ENCODE measurements at regions of chr10 and their contacts with region 1.

Region 1: DNA sequence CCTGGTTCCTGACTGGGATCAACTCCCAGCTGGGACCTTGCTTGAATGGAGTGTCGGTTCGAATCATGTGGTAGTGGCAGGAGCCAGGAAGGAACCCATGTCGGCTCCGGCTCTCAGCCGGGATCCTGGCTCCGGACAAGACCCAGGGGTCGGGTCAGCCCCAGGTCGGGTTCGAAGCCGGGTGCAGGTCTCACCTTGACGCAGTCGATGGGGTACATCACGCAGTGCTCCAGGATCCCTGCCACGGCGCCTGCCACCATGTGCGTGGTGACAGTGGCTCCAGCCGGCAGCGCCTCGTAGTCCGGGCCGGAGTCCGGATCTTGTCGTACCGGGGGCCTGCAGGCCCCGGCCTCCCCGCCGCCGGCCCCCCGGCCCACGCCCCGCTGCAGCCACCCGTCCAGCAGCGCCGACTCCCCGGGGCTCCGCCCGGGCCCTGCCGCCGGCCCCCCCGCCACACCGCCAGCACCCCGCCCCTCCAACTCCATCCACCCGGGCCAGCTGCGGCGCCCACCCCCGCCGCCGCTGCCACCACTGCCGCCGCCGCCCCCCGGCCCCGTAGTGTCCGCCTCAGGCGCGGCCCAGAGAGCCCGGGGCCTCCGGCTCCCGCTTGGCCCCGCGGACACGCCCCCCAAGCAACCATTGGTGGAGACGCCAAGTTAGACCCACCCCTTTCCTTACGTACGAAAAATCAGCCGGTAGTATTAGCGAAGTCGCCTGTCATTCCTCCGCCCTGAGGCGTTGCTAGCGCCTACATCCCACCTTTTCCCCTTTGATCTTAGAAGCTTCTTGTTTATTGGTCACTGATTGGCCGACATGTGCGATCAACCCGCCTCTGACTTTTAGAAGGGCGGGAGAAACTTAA is at the start of gene SLC25A28:
- DNase-seq: peak; percentile 35 to 100 (median 98)
- H3K4me3 ChIP-seq: peak within 1 kb of the TSS; percentile 80 to 92 (median 90)
- H3K27ac ChIP-seq: peak within 1 kb of the TSS; percentile 98
- H3K4me1 ChIP-seq: peaks cover 2 to 29% (median 24%) of the 10 kb centered on the region in 3 donors
- H3K27me3 ChIP-seq: no peaks in the 10 kb centered on the region
- CTCF ChIP-seq: no peak
- total RNA-seq, gene SLC25A28: 43.0 TPM

Region 2: GRCh38 chr10:99429517-99430095 is 190.5 kb before region 1 on chr10:
- intact Hi-C with region 1: loop called (anchors 10 kb)
- DNase-seq: no peak
- H3K4me3 ChIP-seq: peak overlapping the region; percentile 69 to 98 (median 92)
- H3K27ac ChIP-seq: peak overlapping the region; percentile 94 to 96
- H3K4me1 ChIP-seq: peaks cover 0 to 27% (median 16%) of the 10 kb centered on the region in 3 donors
- H3K27me3 ChIP-seq: no peaks in the 10 kb centered on the region
- CTCF ChIP-seq: no peak

Measured in kidney (tissue), 22 donors.